ENCODE measurements at regions of chr17 and their contacts with region 1.

Region 1: GRCh38 chr17:13888056-13888609 is 181.2 kb upstream of the COX10 start:
- DNase-seq: peak in 4 of 5 donors; percentile 26 to 42 (median 32)
- ATAC-seq: no peak
- H3K4me3 ChIP-seq: no peak overlapping the region
- H3K27ac ChIP-seq: no peak overlapping the region
- H3K4me1 ChIP-seq: peaks cover 0 to 14% (median 0%) of the 10 kb centered on the region in 12 donors
- H3K27me3 ChIP-seq: no peaks in the 10 kb centered on the region
- CTCF ChIP-seq: no peak
- POLR2A ChIP-seq: no peak

Region 2: GRCh38 chr17:13776027-13776588 is 112.0 kb before region 1 on chr17:
- intact Hi-C with region 1: loop called in 1 of 10 experiments (anchors 5 kb)
- DNase-seq: peak in 3 of 5 donors; percentile 29 to 60 (median 41)
- ATAC-seq: peak; percentile 89 to 97 (median 93)
- H3K4me3 ChIP-seq: no peak overlapping the region
- H3K27ac ChIP-seq: peak overlapping the region in 9 of 12 donors; percentile 11 to 75 (median 44)
- H3K4me1 ChIP-seq: peaks cover 0 to 4% (median 0%) of the 10 kb centered on the region in 12 donors
- H3K27me3 ChIP-seq: no peaks in the 10 kb centered on the region
- CTCF ChIP-seq: no peak
- POLR2A ChIP-seq: no peak

Region 3: DNA sequence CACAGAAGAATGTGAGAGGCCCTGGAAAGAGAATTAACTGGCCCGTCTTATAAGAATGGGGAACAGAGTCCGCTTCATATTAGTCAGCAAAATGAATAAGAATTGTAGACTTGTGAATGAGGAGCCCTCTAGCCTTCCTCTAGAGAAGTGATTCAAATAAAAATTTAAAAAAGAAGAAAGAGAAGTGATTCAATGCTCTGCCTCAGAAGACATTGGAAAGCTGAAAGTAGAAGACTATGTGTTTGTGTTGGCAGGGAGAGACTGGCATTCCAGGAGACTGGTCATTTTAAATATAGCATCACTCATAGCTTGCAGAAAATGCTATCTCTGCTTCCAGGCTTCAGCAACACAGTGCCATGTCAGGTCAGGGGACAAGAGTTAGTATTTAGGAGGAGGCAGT is 95.8 kb before region 1 on chr17:
- intact Hi-C with region 1: loop called in 2 of 10 experiments (anchors 5 to 10 kb)
- DNase-seq: peak in 2 of 5 donors; percentile 21 to 28
- ATAC-seq: peak; percentile 89 to 96 (median 92)
- H3K4me3 ChIP-seq: no peak overlapping the region
- H3K27ac ChIP-seq: peak overlapping the region in 10 of 12 donors; percentile 9 to 87 (median 64)
- H3K4me1 ChIP-seq: peaks cover 0 to 17% (median 0%) of the 10 kb centered on the region in 12 donors
- H3K27me3 ChIP-seq: no peaks in the 10 kb centered on the region
- CTCF ChIP-seq: no peak
- POLR2A ChIP-seq: no peak

Region 4: DNA sequence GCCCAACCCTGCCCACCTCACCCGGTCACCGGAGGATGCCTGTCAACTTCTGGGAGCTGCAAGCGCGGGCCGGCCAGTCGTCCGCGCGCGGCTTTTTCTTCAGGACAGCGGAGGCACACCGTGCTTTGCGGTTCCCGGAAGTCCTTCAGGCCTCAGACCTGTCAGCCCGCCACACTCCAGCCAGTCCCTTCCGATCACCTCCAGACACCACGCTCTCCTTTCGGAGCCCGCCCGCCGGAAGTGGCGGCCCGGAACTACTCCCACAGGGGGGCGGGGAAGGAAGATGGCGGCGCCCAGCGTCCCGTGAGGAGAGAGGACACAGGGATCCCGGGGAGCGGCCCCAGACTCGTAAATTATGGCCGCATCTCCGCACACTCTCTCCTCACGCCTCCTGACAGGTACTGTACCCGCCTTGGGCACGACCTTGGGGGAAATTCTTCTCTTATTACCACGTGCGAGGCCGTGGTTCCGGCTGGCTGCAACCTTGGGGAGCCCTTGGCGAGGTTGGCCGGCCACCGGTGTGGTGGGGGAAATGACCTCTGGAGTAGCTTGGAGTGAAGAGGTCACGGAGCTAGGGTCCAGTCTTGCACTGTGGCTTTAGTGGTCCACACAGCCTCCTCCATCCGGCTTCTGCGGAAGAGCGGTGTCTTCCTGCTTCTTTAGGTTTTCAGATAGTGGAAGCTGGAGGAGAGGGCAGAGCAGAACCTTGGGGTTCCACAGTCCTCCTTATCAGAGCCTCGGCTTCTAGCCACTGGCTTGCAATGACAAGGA is 181.3 kb after region 1 on chr17 and contains the start of gene COX10:
- intact Hi-C with region 1: loop called in 1 of 10 experiments (anchors 5 kb)
- DNase-seq: peak; percentile 88 to 93 (median 91)
- ATAC-seq: peak; percentile 97 to 100 (median 99)
- H3K4me3 ChIP-seq: peak within 1 kb of the TSS; percentile 82 to 99 (median 94)
- H3K27ac ChIP-seq: peak within 1 kb of the TSS; percentile 84 to 96 (median 89)
- H3K4me1 ChIP-seq: peaks cover 0 to 39% (median 23%) of the 10 kb centered on the region in 12 donors
- H3K27me3 ChIP-seq: no peaks in the 10 kb centered on the region
- CTCF ChIP-seq: peak in 2 of 12 donors; percentile 5 to 15
- POLR2A ChIP-seq: peak in 1 of 2 donors; percentile 70
- total RNA-seq, gene COX10: 36.6 to 96.0 (median 55.4) TPM